ENCODE measurements at regions of chr3 and their contacts with region 1.

Region 1: DNA sequence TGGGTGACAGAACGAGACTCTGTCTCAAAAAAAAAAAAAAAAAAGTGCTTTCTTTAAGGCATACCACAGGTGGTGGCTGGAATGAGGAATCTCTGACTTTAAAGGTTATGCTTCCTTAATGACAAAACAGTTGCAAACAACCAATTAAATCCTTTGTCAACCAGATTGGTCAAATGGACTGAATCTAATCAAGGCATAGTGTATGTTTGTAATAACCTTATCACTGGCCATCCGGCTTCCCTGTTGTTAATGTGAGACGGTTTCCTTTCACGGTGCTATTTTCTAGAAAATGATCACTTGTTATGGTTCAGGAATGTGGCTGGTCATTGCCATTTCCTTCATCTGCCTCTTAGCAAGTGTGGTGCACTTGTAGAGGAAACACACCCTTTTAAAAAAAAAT is 75.9 kb downstream of the FLNB start:
- DNase-seq: no peak
- ATAC-seq: no peak
- H3K4me3 ChIP-seq: no peak overlapping the region
- H3K27ac ChIP-seq: no peak overlapping the region
- H3K4me1 ChIP-seq: no peaks in the 10 kb centered on the region; the same call in 1 of the 2 replicates
- H3K27me3 ChIP-seq: no peaks in the 10 kb centered on the region
- CTCF ChIP-seq: no peak

Region 2: GRCh38 chr3:58013973-58014649 is 70.1 kb before region 1 on chr3:
- CTCF ChIA-PET with region 1: no interaction called
- POLR2A ChIA-PET with region 1: interaction called, 14 read pairs
- in situ Hi-C with region 1: no loop called
- intact Hi-C with region 1: no loop called
- DNase-seq: no peak
- ATAC-seq: no peak
- H3K4me3 ChIP-seq: no peak overlapping the region
- H3K27ac ChIP-seq: peak overlapping the region; percentile 54
- H3K4me1 ChIP-seq: peaks cover 60% of the 10 kb centered on the region
- H3K27me3 ChIP-seq: no peaks in the 10 kb centered on the region
- CTCF ChIP-seq: no peak

Measured in Panc1 (cell line).